Activated B cell treated with CpG ODN at 0.5 μM for 24 hours (primary cell): ENCODE measurements at regions of chr22 and their contacts with region 1.

Region 1: GRCh38 chr22:42079319-42080251 is at the start of gene SMDT1:
- DNase-seq: peak; percentile 97
- ATAC-seq: peak; percentile 89
- H3K4me3 Mint-ChIP-seq: peak within 1 kb of the TSS; percentile 95
- H3K27ac Mint-ChIP-seq: peak within 1 kb of the TSS; percentile 97
- H3K4me1 Mint-ChIP-seq: peaks cover 38% of the 10 kb centered on the region
- H3K27me3 Mint-ChIP-seq: no peaks in the 10 kb centered on the region
- CTCF ChIP-seq: no peak
- total RNA-seq, gene SMDT1: 165 and 167 TPM in 2 replicates

Region 2: DNA sequence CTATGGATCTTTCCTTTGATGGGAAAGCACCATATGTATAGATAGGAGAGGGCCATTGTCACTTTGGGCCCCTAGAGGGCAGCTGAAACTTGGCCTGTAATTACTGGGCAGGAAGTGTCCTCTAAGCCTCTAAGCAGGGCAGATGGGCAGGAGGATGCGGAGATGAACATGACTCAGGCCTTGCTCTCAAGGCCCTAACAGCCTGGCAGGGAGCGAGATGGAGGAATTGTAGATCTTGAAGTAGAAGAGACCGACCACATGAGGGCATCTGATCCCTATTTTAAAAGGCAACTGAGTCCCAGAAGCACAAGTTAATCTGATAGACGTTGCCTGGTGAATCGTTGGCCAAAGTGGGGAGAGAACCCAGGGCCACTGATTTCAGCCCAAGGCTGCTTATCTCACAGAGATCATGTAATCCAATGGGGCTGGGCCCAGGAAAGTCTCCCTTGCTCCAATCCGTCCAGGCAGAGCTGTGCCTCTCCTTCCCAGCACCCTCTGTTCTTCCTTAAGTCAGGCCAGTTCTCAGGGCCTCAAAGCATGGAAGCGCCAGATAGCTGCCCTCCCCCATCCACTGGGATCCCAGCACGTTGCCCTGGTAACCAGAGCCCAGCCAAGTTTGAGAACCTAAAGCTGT is 112.9 kb before region 1 on chr22:
- CTCF ChIA-PET with region 1: interaction called, 3 read pairs
- POLR2A ChIA-PET with region 1: interaction called, 14 read pairs
- intact Hi-C with region 1: no loop called
- DNase-seq: no peak
- ATAC-seq: peak; percentile 89
- H3K4me3 Mint-ChIP-seq: no peak overlapping the region
- H3K27ac Mint-ChIP-seq: no peak overlapping the region
- H3K4me1 Mint-ChIP-seq: no peaks in the 10 kb centered on the region
- H3K27me3 Mint-ChIP-seq: peaks cover 10% of the 10 kb centered on the region
- CTCF ChIP-seq: no peak

Region 3: DNA sequence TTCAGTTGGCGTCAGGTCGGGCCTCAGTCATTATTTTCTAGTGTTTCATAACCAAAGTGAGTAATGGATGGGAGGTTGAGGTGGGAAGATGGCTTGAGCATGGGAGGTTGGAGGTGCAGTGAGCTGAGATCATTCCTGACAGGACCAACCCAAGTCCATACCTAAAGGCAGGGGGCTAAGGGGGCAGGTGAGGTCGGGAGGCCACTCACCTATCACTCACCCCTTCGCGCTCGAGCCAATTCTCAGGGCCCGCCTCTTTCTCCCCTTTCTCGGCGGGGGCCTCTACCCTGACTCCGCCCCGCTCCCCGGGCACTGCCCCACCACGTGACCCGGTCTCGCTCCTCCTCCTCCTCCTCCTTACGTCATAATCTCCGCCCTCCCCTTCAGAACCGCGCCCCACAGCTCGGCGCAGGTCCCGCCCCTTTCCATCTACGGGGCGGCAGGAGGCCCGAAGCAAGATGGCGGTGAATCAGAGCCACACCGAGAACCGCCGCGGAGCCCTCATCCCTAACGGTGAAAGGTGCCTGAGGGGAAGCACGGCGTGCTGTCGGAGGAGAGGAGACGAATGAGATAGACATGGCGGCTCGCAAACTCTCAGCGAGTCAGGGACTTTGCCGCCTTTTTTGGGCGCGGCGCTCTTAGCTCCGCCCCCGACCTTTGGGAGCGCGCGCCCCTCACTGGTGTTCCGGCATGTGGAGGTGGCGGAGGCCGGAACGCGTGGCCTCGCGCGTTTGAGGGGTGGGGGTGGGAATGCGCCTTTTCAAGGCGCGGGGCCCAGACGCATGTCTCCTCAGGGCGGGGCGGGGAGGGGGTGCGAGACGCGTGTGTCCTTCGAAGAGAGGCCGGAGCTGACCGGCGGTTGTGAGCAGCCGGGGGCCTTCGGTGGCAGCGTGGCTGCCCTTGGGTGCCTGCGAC is 81.0 kb before region 1 on chr22 and contains the start of gene WBP2NL:
- CTCF ChIA-PET with region 1: no interaction called
- POLR2A ChIA-PET with region 1: interaction called, 24 read pairs
- intact Hi-C with region 1: loop called (anchors 2 kb)
- DNase-seq: peak; percentile 83
- ATAC-seq: peak; percentile 96
- H3K4me3 Mint-ChIP-seq: peak within 1 kb of the TSS; percentile 98
- H3K27ac Mint-ChIP-seq: peak within 1 kb of the TSS; percentile 98
- H3K4me1 Mint-ChIP-seq: peaks cover 22% of the 10 kb centered on the region
- H3K27me3 Mint-ChIP-seq: no peaks in the 10 kb centered on the region
- CTCF ChIP-seq: no peak
- total RNA-seq, gene WBP2NL: 6.8 and 7.8 TPM in 2 replicates

Region 4: GRCh38 chr22:42022162-42022835 is 57.3 kb before region 1 on chr22:
- CTCF ChIA-PET with region 1: no interaction called
- POLR2A ChIA-PET with region 1: interaction called, 11 read pairs
- intact Hi-C with region 1: no loop called
- DNase-seq: no peak
- ATAC-seq: peak; percentile 77
- H3K4me3 Mint-ChIP-seq: peak overlapping the region; percentile 32
- H3K27ac Mint-ChIP-seq: peak overlapping the region; percentile 59
- H3K4me1 Mint-ChIP-seq: peaks cover 19% of the 10 kb centered on the region
- H3K27me3 Mint-ChIP-seq: no peaks in the 10 kb centered on the region
- CTCF ChIP-seq: no peak

Region 5: GRCh38 chr22:42033263-42034181 is 46.1 kb before region 1 on chr22:
- CTCF ChIA-PET with region 1: no interaction called
- POLR2A ChIA-PET with region 1: interaction called, 22 read pairs
- intact Hi-C with region 1: no loop called
- DNase-seq: no peak
- ATAC-seq: no peak
- H3K4me3 Mint-ChIP-seq: no peak overlapping the region
- H3K27ac Mint-ChIP-seq: no peak overlapping the region
- H3K4me1 Mint-ChIP-seq: peaks cover 35% of the 10 kb centered on the region
- H3K27me3 Mint-ChIP-seq: no peaks in the 10 kb centered on the region
- CTCF ChIP-seq: no peak

Region 6: GRCh38 chr22:43009444-43009843 is 929.9 kb after region 1 on chr22:
- CTCF ChIA-PET with region 1: no interaction called
- POLR2A ChIA-PET with region 1: interaction called, 10 read pairs
- intact Hi-C with region 1: no loop called
- DNase-seq: no peak
- ATAC-seq: no peak
- H3K4me3 Mint-ChIP-seq: no peak overlapping the region
- H3K27ac Mint-ChIP-seq: no peak overlapping the region
- H3K4me1 Mint-ChIP-seq: peaks cover 59% of the 10 kb centered on the region
- H3K27me3 Mint-ChIP-seq: no peaks in the 10 kb centered on the region
- CTCF ChIP-seq: no peak